Astrocyte of the cerebellum (primary cell): ENCODE measurements at regions of chr6 and their contacts with region 1.

Region 1: GRCh38 chr6:45896783-45897441 is 118.7 kb downstream of the CLIC5 start:
- DNase-seq: peak; percentile 51
- H3K4me3 ChIP-seq: no peak overlapping the region
- CTCF ChIP-seq: no peak

Region 2: GRCh38 chr6:44655412-44656342 is 1241.2 kb before region 1 on chr6:
- in situ Hi-C with region 1: no loop called
- DNase-seq: no peak
- H3K4me3 ChIP-seq: no peak overlapping the region
- CTCF ChIP-seq: peak; percentile 94

Region 3: GRCh38 chr6:45812922-45813321 is 84.0 kb before region 1 on chr6:
- in situ Hi-C with region 1: no loop called
- DNase-seq: peak; percentile 70
- H3K4me3 ChIP-seq: no peak overlapping the region
- CTCF ChIP-seq: no peak

Region 4: GRCh38 chr6:45843848-45844521 is 52.9 kb before region 1 on chr6:
- in situ Hi-C with region 1: loop called (anchors 5 kb)
- DNase-seq: peak; percentile 59
- H3K4me3 ChIP-seq: no peak overlapping the region
- CTCF ChIP-seq: no peak

Region 5: GRCh38 chr6:45946352-45946751 is 49.4 kb after region 1 on chr6:
- in situ Hi-C with region 1: no loop called
- DNase-seq: peak; percentile 77
- H3K4me3 ChIP-seq: no peak overlapping the region
- CTCF ChIP-seq: peak; percentile 69